H1 (cell line): ENCODE measurements at regions of chr4 and their contacts with region 1.

Region 1: DNA sequence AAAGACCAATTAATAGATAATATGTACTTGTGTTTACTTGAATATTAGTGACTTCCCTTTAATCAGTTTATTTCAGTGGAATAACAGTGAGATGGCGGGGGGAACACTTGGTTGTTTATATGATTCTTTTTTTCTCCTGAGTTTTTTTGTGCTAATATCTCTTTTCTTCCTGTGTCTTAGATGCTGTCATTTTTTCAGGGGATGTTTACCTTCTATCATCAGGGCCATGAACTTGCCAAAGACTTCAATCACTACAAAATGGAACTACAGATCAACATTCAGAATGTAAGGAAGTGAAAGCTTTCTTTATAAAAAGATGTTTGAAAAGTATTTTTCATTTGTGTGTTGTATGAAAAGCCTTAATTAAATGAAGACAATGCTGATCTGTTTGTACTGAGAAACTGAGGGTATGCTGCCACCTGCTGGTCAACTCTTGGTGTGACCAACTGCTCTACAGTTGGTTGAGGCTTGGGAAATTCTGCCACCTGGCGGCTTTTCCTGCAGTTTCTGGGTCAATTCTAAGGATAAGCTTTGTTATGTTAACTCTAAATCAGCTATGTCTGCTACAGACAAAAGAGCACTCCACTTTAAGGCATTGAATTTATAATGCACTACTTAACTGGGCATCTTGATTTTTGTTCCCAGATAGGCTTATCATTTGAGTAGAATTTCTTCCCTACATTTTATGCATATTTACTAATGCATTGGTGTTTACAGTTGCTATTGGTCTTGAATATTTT is 134.8 kb downstream of the ARHGAP10 start:
- DNase-seq: peak; percentile 88 to 94
- H3K4me3 ChIP-seq: peak overlapping the region in 1 of 4 experiments; percentile 12; a peak in 1 of 8 replicates
- H3K27ac ChIP-seq: no peak overlapping the region
- H3K4me1 ChIP-seq: peaks cover 2 to 19% (median 10%) of the 10 kb centered on the region in 4 experiments; a peak in 6 of 7 replicates
- H3K27me3 ChIP-seq: no peaks in the 10 kb centered on the region
- CTCF ChIP-seq: peak; percentile 71 to 100 (median 98)
- EP300 ChIP-seq: no peak
- POLR2A ChIP-seq: no peak
- RAD21 ChIP-seq: peak; percentile 100

Region 2: DNA sequence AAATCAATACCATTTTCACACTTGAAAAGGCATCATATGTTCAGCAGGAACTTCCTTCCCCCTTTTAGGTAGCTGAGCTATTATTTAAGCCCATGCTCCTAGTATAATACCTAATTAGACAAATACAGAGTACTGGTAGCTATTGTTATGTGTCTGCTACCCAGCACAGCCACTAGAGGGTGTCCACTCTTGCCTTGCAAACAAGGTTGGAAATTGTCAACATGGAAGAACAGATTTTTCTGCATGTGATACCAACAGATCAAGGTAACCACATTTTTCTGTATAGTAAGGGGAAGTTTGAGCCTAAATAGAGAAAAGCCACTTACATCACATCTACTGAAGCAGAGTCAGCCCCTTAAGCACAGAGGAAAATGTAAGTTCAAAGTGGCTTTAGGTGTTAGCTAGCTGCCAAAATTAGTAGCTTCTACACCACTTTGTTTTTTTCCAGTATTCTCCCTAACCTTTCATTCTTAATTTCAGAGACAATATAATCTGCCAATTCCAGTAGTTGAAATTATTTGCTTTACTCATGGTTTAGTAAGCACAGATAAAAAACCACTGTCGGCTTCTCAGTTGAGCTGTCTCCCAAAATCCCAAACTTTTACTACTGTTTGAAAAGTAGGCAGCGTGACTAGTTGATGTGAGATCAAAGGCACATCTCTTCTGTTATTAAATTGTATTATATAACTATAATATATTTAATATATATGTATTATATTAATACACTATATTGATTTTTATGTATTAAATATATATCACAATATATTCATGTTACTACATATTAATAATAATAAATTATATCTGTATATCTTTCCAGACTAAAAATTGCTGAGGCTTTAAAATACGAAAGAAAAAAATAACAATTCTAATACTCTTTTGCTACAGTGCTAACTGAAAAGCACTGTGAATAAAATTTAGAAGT is 347.6 kb before region 1 on chr4:
- CTCF ChIA-PET with region 1: interaction called, 15 read pairs
- POLR2A ChIA-PET with region 1: no interaction called
- DNase-seq: peak in 1 of 2 experiments; percentile 59
- H3K4me3 ChIP-seq: no peak overlapping the region
- H3K27ac ChIP-seq: no peak overlapping the region
- H3K4me1 ChIP-seq: no peaks in the 10 kb centered on the region
- H3K27me3 ChIP-seq: no peaks in the 10 kb centered on the region
- CTCF ChIP-seq: peak in 2 of 3 experiments; percentile 75 to 90; a peak in 3 of 4 replicates
- EP300 ChIP-seq: no peak
- POLR2A ChIP-seq: no peak
- RAD21 ChIP-seq: peak; percentile 78 to 79

Region 3: GRCh38 chr4:147605499-147605898 is 261.2 kb before region 1 on chr4:
- CTCF ChIA-PET with region 1: interaction called, 93 read pairs
- POLR2A ChIA-PET with region 1: no interaction called
- DNase-seq: no peak
- H3K4me3 ChIP-seq: no peak overlapping the region
- H3K27ac ChIP-seq: no peak overlapping the region
- H3K4me1 ChIP-seq: no peaks in the 10 kb centered on the region
- H3K27me3 ChIP-seq: no peaks in the 10 kb centered on the region
- CTCF ChIP-seq: no peak
- EP300 ChIP-seq: no peak
- POLR2A ChIP-seq: no peak
- RAD21 ChIP-seq: no peak

Region 4: DNA sequence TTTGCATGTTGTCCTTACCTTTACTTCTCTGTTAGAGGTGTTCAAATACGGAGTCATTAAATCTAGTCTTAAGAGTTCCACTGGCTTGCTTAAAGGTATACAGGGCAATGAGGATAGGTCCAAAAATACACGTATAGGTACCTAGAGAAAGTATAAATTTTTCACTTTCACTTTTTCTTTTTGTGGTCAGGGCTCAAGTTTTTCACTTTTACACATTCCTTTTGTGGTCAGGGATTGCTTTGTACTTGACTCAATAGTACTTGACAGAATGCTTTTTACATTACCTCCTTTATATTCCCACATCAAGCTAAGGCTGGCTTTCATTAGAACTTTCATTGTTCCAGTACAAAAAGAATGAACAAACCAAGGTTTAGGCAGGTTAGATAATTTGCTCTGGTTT is 227.8 kb before region 1 on chr4:
- CTCF ChIA-PET with region 1: interaction called, 20 read pairs
- POLR2A ChIA-PET with region 1: no interaction called
- DNase-seq: no peak
- H3K4me3 ChIP-seq: no peak overlapping the region
- H3K27ac ChIP-seq: no peak overlapping the region
- H3K4me1 ChIP-seq: peaks cover 0 to 11% (median 0%) of the 10 kb centered on the region in 4 experiments; a peak in 1 of 7 replicates
- H3K27me3 ChIP-seq: no peaks in the 10 kb centered on the region
- CTCF ChIP-seq: no peak
- EP300 ChIP-seq: no peak
- POLR2A ChIP-seq: no peak
- RAD21 ChIP-seq: no peak

Region 5: DNA sequence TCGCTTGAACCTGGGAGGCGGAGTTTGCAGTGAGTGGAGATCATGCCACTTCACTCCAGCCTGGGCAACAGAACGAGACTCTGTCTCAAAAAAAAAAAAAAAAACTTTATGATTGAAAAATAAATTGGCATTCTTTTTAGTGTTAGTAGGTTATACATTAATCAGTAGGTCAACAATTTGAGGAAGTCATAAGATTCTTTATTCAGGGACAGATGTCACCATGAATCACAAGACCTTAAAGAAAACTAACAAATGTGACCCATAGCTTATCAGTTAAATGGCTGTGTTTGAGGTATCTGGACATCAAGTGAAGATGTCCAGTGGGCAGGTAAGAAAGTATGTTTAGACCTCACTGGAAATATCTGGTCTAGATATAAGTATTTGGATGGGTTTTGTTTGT is 173.5 kb before region 1 on chr4:
- CTCF ChIA-PET with region 1: interaction called, 17 read pairs
- POLR2A ChIA-PET with region 1: no interaction called
- DNase-seq: no peak
- H3K4me3 ChIP-seq: no peak overlapping the region
- H3K27ac ChIP-seq: no peak overlapping the region
- H3K4me1 ChIP-seq: no peaks in the 10 kb centered on the region
- H3K27me3 ChIP-seq: no peaks in the 10 kb centered on the region
- CTCF ChIP-seq: no peak
- EP300 ChIP-seq: no peak
- POLR2A ChIP-seq: no peak
- RAD21 ChIP-seq: no peak

Region 6: DNA sequence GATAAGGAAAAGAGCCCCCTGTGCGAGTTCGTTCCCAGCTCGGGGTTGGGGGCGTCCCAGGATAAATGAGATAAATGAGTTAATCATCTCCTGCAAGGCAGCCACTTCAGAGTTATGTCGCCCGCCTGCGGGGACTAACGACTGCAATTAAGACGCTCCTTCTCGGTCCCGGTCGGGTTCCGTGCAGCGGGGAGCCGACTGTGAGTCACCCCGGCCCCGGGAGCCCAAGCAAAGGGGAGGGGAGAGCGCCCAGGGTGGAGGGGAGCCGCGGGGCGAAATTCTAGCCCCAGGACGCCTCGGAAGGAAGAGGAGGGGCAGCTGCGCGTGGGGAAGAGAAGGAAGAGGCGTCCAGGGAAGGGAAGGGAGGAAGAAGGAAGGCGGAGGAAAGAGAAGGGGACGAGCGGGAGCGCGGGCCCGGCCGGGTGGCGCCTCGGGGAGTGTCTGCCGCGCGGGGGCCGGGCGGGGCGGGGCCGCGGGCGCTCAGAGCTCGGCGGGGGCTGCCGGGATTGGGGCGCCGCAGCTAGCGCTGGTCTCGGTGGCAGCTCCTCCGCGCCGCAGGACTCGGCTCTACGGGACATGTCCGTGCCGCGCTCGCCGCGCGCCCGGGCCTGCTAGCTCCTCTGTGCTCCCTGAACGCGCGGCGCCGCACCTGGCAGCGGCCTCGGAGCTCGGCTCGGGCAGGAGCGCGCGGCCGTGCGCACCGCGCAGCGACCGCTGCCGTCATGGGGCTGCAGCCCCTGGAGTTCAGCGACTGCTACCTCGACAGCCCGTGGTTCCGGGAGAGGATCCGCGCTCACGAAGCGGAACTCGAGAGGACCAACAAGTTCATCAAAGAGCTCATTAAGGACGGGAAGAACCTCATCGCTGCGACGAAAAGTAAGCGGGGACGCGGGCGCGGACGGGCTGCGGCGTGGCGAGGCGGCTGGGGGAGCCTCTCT is 134.9 kb before region 1 on chr4 and contains the start of gene ARHGAP10:
- CTCF ChIA-PET with region 1: interaction called, 25 read pairs
- POLR2A ChIA-PET with region 1: interaction called, 12 read pairs
- DNase-seq: peak in 1 of 2 experiments; percentile 82
- H3K4me3 ChIP-seq: peak within 1 kb of the TSS; percentile 80 to 97 (median 88)
- H3K27ac ChIP-seq: no peak within 1 kb of the TSS
- H3K4me1 ChIP-seq: peaks cover 3 to 12% (median 7%) of the 10 kb centered on the region in 4 experiments; a peak in 5 of 7 replicates
- H3K27me3 ChIP-seq: peaks cover 3 to 37% (median 27%) of the 10 kb centered on the region in 4 experiments
- CTCF ChIP-seq: no peak
- EP300 ChIP-seq: no peak
- POLR2A ChIP-seq: peak in 1 of 2 experiments; percentile 44; a peak in 2 of 3 replicates
- RAD21 ChIP-seq: no peak
- total RNA-seq, gene ARHGAP10: 6.0 and 6.1 TPM in 2 replicates

Region 7: DNA sequence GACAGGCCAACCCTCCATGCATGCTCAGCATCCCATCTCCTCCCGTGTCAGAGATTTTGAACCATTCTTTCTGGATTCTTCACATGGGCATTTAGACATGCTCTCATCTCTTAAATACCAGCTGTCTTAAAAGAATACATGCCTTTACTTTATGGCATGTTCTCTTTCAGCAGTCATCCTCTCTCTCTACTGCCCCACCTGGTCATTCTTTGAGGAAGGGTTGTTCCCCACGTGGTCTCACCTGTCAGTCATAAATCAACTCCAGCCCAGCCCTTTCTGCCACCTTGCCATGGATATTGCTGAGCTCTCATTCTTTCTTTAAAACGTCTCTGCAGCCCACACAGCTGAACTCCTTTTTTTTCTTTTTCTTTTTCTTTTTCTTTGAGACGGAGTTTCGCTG is 23.5 kb before region 1 on chr4:
- CTCF ChIA-PET with region 1: interaction called, 50 read pairs
- POLR2A ChIA-PET with region 1: no interaction called
- DNase-seq: no peak
- H3K4me3 ChIP-seq: no peak overlapping the region
- H3K27ac ChIP-seq: no peak overlapping the region
- H3K4me1 ChIP-seq: peaks cover 0 to 10% (median 4%) of the 10 kb centered on the region in 4 experiments; a peak in 4 of 7 replicates
- H3K27me3 ChIP-seq: no peaks in the 10 kb centered on the region
- CTCF ChIP-seq: peak; percentile 28 to 64 (median 46); a peak in 3 of 4 replicates
- EP300 ChIP-seq: no peak
- POLR2A ChIP-seq: no peak
- RAD21 ChIP-seq: peak; percentile 31 to 34; a peak in 3 of 4 replicates

Region 8: DNA sequence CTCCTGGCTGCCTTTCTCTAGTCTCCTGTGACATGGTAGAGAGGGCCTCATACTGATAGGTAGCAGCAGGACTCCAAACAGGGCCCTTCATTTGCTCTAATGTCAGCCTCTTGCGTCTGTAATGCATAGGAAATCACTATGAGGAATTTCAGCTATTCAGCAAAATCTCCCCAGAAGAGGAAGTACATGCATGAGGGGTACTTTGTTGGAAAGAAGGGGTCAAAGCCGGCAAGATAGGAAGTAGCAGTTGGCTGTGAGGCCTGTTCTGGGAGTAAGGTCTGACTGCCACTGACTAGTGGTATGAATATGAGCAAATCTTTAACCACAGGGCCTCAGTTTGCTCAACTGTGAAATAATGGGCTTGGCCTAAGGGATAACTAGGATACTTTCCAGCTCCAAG is 148.4 kb after region 1 on chr4:
- CTCF ChIA-PET with region 1: no interaction called
- POLR2A ChIA-PET with region 1: no interaction called
- DNase-seq: no peak
- H3K4me3 ChIP-seq: no peak overlapping the region
- H3K27ac ChIP-seq: no peak overlapping the region
- H3K4me1 ChIP-seq: 0 out of 7 replicates have a peak, but pooled peaks cover 0 to 3% (median 0%) of the 10 kb centered on the region in 4 experiments
- H3K27me3 ChIP-seq: no peaks in the 10 kb centered on the region
- CTCF ChIP-seq: no peak
- EP300 ChIP-seq: no peak
- POLR2A ChIP-seq: no peak
- RAD21 ChIP-seq: no peak

Region 9: GRCh38 chr4:148056869-148057268 is 190.2 kb after region 1 on chr4:
- CTCF ChIA-PET with region 1: no interaction called
- POLR2A ChIA-PET with region 1: no interaction called
- DNase-seq: peak in 1 of 2 experiments; percentile 25
- H3K4me3 ChIP-seq: no peak overlapping the region
- H3K27ac ChIP-seq: no peak overlapping the region
- H3K4me1 ChIP-seq: peaks cover 0 to 7% (median 3%) of the 10 kb centered on the region in 4 experiments; a peak in 3 of 7 replicates
- H3K27me3 ChIP-seq: no peaks in the 10 kb centered on the region
- CTCF ChIP-seq: peak; percentile 40 to 54 (median 43)
- EP300 ChIP-seq: no peak
- POLR2A ChIP-seq: no peak
- RAD21 ChIP-seq: peak; percentile 62 to 75

Region 10: GRCh38 chr4:148079961-148080360 is 213.3 kb after region 1 on chr4:
- CTCF ChIA-PET with region 1: no interaction called
- POLR2A ChIA-PET with region 1: no interaction called
- DNase-seq: no peak
- H3K4me3 ChIP-seq: no peak overlapping the region
- H3K27ac ChIP-seq: no peak overlapping the region
- H3K4me1 ChIP-seq: no peaks in the 10 kb centered on the region
- H3K27me3 ChIP-seq: no peaks in the 10 kb centered on the region
- CTCF ChIP-seq: no peak
- EP300 ChIP-seq: no peak
- POLR2A ChIP-seq: no peak
- RAD21 ChIP-seq: no peak